ENCODE measurements at regions of chr10 and their contacts with region 1.

Region 1: DNA sequence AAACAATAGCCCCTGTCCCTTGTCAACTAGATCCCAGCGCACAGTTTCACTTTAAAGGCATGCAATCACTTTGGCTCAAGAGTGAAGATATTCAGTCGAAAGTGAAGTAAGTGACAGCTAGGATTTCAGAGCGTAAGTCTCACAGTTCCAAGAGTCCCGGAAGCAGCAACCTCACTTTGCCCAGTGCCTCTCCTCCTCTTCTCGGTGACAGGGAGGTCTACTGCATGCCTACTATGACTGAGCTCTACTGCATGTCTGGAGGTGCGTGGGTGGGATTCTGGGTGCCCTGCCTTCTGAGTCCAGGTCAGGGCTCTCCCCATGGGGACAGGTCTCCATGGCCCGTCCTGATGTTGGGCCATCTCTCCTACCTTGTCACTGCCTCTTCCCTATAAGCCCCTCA is 17.0 kb downstream of the PRKCQ start:
- DNase-seq: no peak
- ATAC-seq: peak; percentile 57 to 81 (median 72)
- H3K4me3 ChIP-seq: peak overlapping the region; percentile 28
- H3K27ac ChIP-seq: peak overlapping the region; percentile 58
- H3K4me1 ChIP-seq: peaks cover 49% of the 10 kb centered on the region
- H3K27me3 ChIP-seq: no peaks in the 10 kb centered on the region
- CTCF ChIP-seq: no peak

Region 2: DNA sequence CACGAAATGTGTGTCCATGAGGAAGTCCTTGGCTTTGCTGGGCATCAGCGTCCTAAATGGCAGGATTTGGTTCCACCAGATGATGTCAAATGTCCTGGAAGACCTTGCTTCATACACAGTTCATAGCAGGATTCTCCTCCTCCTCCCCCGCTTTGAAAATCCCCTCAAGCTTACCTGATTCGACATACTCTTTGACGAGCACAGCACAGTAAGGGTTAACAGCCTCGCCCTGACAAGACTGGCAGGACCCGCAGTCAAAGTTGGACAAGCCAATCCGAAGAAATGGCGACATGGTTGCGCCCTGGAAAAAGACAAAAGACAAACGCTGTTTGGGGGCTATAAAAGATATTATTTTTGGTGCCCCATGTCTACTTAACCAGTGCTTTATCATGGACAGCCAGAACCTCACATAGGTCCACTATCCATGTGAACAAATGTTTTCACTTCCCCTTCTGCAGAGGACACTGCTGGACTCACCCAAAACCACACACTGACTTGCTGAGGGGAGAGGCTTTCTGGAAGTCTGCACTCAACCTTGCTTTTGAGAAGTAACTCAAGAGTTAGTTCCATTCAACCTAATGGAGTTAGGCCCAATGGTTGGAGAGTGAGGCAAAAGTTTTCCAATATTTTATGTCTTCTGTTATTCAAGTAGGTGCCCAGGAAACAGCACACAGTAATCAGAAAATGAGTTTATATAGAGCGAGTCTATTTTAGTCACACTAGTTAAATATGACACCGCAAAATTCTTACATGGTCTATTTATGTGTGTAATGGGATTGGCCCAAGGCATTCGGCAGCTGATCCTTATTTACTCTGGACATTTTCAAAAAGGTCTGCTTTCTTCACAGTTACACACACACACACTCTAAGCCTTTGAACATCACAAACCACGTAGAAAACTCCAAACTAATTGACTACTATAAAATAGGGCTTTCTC is 48.0 kb before region 1 on chr10:
- intact Hi-C with region 1: loop called in 1 of 2 experiments (anchors 5 kb)
- DNase-seq: no peak
- ATAC-seq: peak; percentile 75 to 90 (median 84)
- H3K4me3 ChIP-seq: peak overlapping the region; percentile 57
- H3K27ac ChIP-seq: peak overlapping the region; percentile 87
- H3K4me1 ChIP-seq: peaks cover 26% of the 10 kb centered on the region
- H3K27me3 ChIP-seq: no peaks in the 10 kb centered on the region
- CTCF ChIP-seq: no peak

Region 3: DNA sequence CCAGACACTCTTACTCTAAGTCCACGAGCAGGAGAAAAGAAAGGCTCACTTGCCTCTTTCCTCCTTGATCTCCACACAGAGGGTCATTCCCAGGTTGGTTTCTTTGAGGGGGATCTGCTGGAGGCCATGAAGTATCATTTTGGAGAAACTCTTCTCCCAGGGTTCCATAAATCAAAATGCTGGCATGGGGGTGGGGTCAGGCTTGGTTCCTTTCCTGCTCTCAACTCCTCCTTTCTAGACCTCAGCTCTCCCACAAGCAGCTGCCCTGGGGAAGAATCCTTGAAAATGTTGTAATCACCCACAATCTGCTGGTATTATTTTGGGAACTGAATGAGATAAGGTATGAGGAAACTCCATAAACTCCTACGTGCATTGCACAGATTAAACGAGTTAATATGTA is 37.4 kb before region 1 on chr10:
- intact Hi-C with region 1: loop called in 1 of 2 experiments (anchors 5 kb)
- DNase-seq: no peak
- ATAC-seq: no peak
- H3K4me3 ChIP-seq: no peak overlapping the region
- H3K27ac ChIP-seq: no peak overlapping the region
- H3K4me1 ChIP-seq: peaks cover 3% of the 10 kb centered on the region
- H3K27me3 ChIP-seq: no peaks in the 10 kb centered on the region
- CTCF ChIP-seq: no peak